Spleen (tissue), 13 donors: ENCODE measurements at regions of chr16 and their contacts with region 1.

Region 1: GRCh38 chr16:5580296-5580695 is 482.7 kb upstream of the EEF2KMT start:
- DNase-seq: no peak
- H3K4me3 ChIP-seq: no peak overlapping the region
- H3K27ac ChIP-seq: no peak overlapping the region
- H3K4me1 ChIP-seq: no peaks in the 10 kb centered on the region
- H3K27me3 ChIP-seq: peaks cover 0 to 5% (median 0%) of the 10 kb centered on the region in 7 donors
- CTCF ChIP-seq: no peak
- POLR2A ChIP-seq: no peak

Region 2: DNA sequence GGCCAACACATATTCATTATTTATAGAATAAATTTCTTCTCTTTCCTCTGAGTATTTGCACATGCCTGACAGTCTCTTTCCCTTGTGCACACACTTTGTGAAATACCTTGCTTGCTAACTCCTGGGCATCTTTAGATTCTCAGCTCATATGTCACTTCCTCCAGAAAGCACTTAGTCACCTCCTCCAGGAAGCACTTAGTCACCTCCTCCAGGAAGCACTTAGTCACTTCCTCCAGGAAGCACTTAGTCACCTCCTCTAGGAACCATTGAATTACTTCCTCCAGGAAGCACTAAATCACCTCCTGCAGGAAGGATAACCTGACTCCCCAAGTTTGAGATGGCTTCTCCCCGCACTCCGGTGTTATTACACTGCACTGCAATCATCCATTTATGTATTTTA is 20.2 kb before region 1 on chr16:
- intact Hi-C with region 1: no loop called
- DNase-seq: no peak
- H3K4me3 ChIP-seq: no peak overlapping the region
- H3K27ac ChIP-seq: no peak overlapping the region
- H3K4me1 ChIP-seq: no peaks in the 10 kb centered on the region
- H3K27me3 ChIP-seq: peaks cover 0 to 5% (median 0%) of the 10 kb centered on the region in 7 donors
- CTCF ChIP-seq: no peak
- POLR2A ChIP-seq: no peak

Region 3: GRCh38 chr16:5649762-5650743 is 69.8 kb after region 1 on chr16:
- intact Hi-C with region 1: loop called (anchors 10 kb)
- DNase-seq: no peak
- H3K4me3 ChIP-seq: no peak overlapping the region
- H3K27ac ChIP-seq: no peak overlapping the region
- H3K4me1 ChIP-seq: no peaks in the 10 kb centered on the region
- H3K27me3 ChIP-seq: peaks cover 0 to 16% (median 0%) of the 10 kb centered on the region in 7 donors
- CTCF ChIP-seq: no peak
- POLR2A ChIP-seq: no peak

Region 4: GRCh38 chr16:5751216-5751615 is 170.9 kb after region 1 on chr16:
- intact Hi-C with region 1: no loop called
- DNase-seq: no peak
- H3K4me3 ChIP-seq: no peak overlapping the region
- H3K27ac ChIP-seq: no peak overlapping the region
- H3K4me1 ChIP-seq: no peaks in the 10 kb centered on the region
- H3K27me3 ChIP-seq: peaks cover 0 to 3% (median 0%) of the 10 kb centered on the region in 7 donors
- CTCF ChIP-seq: no peak
- POLR2A ChIP-seq: no peak